MCF 10A (cell line): ENCODE measurements at regions of chr3 and their contacts with region 1.

Region 1: DNA sequence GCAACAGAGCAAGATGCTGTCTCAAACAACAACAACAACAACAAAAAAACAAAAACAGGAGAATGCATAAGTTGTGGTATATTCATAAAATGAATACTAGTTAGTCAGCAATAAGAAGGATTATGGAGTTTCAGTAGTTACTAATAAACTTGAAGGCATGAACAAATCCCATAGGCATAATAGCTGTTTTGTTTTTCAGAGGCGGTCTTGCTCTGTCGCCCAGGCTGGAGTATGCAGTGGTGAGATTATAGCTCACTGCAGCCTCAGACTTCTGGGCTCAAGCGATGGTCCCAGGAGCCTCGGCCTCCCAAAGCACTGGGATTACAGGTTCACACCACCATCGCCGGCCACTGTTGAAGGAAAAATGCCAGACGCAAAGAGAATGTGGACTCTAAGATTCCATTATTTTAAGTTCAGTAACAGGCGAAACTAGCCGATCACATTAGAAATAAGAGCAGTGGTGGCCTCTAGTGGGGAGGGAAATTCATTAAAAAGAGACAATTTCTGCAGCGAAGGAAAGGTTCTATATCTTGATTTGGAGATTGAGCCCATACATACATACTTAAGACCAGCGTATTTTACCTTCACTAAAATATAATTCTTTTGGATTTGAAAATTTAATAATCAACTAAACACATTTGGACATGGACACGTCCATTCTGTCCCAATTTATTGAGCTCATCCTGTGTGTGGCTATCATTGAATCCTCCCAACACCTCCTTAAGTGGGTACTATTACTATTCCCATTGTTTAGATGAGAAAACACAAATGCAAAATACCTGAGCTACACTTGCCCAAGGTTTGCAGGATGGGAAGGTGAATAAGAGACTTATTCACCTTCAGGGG is 27.4 kb upstream of the HDAC11 start:
- DNase-seq: peak; percentile 74
- H3K4me3 Mint-ChIP-seq: peak overlapping the region; percentile 92
- H3K27ac Mint-ChIP-seq: peak overlapping the region; percentile 94
- H3K4me1 Mint-ChIP-seq: peaks cover 7% of the 10 kb centered on the region
- H3K27me3 Mint-ChIP-seq: no peaks in the 10 kb centered on the region
- CTCF ChIP-seq: peak; percentile 58

Region 2: GRCh38 chr3:13091898-13092611 is 360.7 kb before region 1 on chr3:
- CTCF ChIA-PET with region 1: interaction called, 110 read pairs
- POLR2A ChIA-PET with region 1: interaction called, 5 read pairs
- intact Hi-C with region 1: loop called (anchors 1 kb)
- DNase-seq: peak; percentile 63
- H3K4me3 Mint-ChIP-seq: no peak overlapping the region
- H3K27ac Mint-ChIP-seq: no peak overlapping the region
- H3K4me1 Mint-ChIP-seq: peaks cover 7% of the 10 kb centered on the region
- H3K27me3 Mint-ChIP-seq: no peaks in the 10 kb centered on the region
- CTCF ChIP-seq: peak; percentile 97

Region 3: DNA sequence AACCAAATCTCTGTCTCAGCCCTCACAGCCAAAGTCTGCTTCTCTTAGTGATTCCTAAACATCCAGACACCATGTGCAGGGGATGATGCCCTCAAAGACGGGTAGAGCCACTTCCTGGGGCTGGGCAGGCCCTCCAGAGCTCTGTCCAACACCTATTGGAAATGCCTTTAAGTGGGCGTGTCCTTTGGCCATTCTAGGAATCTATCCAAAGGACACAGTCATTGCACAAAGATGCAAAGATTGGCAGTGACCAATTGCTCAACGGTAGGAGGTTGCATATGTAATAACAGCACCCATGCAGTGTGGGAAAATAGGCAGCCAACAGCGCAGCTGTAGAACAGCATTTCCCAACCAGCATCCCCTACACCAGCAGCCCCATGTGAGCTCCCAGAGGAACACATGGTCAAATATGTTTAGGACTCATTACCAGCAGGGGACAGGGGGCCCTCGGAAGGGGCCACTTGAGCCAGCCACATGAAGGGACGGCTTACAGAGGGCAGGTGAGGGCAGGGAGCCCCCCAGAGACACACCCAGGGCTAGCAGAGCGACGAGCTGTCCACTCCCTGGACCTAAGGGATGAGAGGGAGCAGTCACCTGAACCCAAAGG is 236.7 kb before region 1 on chr3:
- CTCF ChIA-PET with region 1: no interaction called
- POLR2A ChIA-PET with region 1: no interaction called
- intact Hi-C with region 1: loop called (anchors 5 kb)
- DNase-seq: peak; percentile 93
- H3K4me3 Mint-ChIP-seq: no peak overlapping the region
- H3K27ac Mint-ChIP-seq: no peak overlapping the region
- H3K4me1 Mint-ChIP-seq: peaks cover 12% of the 10 kb centered on the region
- H3K27me3 Mint-ChIP-seq: no peaks in the 10 kb centered on the region
- CTCF ChIP-seq: no peak

Region 4: GRCh38 chr3:13308380-13308801 is 144.3 kb before region 1 on chr3:
- CTCF ChIA-PET with region 1: no interaction called
- POLR2A ChIA-PET with region 1: no interaction called
- intact Hi-C with region 1: loop called (anchors 10 kb)
- DNase-seq: peak; percentile 49
- H3K4me3 Mint-ChIP-seq: no peak overlapping the region
- H3K27ac Mint-ChIP-seq: no peak overlapping the region
- H3K4me1 Mint-ChIP-seq: no peaks in the 10 kb centered on the region
- H3K27me3 Mint-ChIP-seq: no peaks in the 10 kb centered on the region
- CTCF ChIP-seq: no peak

Region 5: DNA sequence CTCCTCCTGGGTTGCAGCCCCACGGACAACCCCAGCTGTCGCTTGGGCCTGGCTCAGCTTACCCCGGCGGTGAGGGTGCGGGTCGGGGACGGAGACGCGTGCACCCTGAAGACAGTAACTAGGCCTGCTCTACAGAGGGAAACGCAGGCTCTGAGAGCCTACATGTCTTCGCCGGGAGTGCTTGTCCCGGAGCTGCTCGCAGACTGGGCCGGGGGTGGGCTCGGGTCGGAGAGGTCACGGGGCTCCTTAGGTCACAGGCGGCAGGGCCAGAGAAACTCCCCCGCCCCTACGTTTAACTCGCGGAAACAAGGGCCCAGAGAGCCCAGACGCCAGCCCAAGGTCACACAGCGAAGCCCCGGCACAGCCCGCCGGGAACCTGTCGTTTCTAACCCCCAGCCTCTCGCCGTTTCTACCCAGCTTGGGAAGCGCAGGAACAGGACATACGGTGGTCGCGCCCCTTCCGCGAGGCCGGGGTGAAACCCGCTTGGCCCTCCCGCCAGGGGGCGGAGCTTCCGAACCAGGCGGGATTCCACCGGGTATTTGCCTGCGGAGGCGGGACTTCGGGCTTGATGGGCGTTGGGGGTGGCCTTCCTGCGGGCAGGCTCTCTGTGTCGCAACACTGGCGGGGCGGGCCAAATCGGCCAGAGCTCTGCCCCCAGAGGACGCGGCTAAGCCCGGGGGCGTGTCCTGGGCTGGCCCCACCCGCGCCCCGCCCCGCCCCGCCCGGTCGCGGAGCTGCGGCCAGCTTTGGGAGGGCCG is 27.0 kb after region 1 on chr3 and contains the start of gene HDAC11:
- CTCF ChIA-PET with region 1: interaction called, 14 read pairs
- POLR2A ChIA-PET with region 1: interaction called, 34 read pairs
- intact Hi-C with region 1: no loop called
- DNase-seq: peak; percentile 96
- H3K4me3 Mint-ChIP-seq: peak within 1 kb of the TSS; percentile 86
- H3K27ac Mint-ChIP-seq: peak within 1 kb of the TSS; percentile 96
- H3K4me1 Mint-ChIP-seq: peaks cover 5% of the 10 kb centered on the region
- H3K27me3 Mint-ChIP-seq: no peaks in the 10 kb centered on the region
- CTCF ChIP-seq: no peak
- total RNA-seq, gene HDAC11: 8.7 and 9.3 TPM in 2 replicates

Region 6: DNA sequence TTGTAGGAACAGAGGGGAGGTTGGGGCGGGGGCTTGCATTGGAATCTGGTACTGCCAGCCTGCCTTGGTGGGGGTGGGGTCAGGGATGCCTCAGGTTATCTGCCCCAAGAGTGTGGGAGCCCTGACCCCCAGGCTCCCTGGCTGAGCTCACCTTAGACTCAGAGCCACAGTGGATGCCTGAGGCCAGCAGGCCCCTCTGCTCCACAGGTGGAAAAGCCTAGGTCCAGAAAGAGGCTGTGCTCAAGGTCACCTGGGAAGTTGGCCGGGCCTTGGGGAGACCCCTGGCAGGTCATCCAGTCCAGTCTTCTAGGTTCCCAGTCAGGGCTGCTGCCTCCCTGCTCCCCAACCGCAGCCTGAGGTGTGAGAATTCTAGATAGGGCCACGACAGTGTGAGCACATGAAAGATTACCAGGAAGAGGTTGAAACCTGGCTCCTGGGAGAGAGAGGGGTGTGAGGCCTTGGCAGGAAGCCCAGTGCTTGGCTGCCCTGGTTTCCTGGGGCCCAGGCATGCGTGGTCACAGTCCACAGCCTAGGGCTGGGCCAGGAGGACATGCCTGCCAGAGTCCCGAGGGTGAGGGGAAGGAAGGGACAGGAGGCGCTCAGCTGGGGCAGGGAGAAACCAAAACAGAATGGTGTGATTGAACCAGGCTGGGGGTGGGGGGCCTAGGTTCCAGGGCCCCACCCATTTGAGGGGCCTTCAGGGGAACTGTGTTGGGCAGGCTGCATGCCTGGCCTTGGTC is 32.3 kb after region 1 on chr3:
- CTCF ChIA-PET with region 1: interaction called, 14 read pairs
- POLR2A ChIA-PET with region 1: interaction called, 34 read pairs
- intact Hi-C with region 1: no loop called
- DNase-seq: peak; percentile 94
- H3K4me3 Mint-ChIP-seq: peak overlapping the region; percentile 28
- H3K27ac Mint-ChIP-seq: peak overlapping the region; percentile 92
- H3K4me1 Mint-ChIP-seq: peaks cover 18% of the 10 kb centered on the region
- H3K27me3 Mint-ChIP-seq: no peaks in the 10 kb centered on the region
- CTCF ChIP-seq: no peak